Activated CD4-positive, alpha-beta T cell treated with anti-CD3 and anti-CD28 coated beads for 36 hours (primary cell): ENCODE measurements at regions of chr5 and their contacts with region 1.

Region 1: DNA sequence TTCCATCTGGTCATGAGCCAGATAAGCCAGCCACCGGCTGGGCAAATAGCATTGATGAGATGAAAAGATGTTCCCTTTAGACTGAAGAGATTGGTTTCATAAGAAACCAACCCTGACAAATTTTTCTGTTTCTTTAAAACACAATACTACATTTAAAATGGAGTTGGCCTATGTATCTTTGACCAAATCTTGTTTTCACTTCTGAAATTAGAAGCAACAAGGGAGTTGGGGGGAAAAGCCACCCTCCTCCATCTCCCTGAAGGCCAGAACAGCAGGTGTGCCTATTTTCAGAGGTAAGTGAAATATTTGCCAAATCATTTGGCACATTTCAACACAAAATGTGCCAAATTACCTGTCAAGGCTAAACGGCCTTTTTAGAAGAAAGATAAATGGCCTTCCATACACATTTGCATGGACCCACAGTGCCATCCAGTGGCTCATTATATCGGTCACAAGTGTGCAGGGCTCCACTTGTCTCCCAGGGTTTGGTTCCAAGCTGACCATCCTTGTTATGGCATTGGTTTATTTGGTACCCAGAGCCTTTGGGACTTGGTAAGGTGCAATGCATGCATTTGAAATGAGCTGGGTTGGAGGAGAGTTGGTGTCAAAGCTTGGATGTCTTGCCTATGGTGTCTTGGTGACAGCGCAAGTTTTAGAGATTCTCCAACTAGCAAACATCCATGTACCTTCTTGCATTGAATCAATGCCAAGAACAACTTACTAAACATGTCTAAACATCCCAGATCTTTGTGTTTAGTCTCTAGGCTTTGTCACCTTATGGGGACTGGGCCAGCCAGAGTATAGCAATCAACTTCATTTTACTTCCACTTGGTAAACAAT is 372.0 kb upstream of the KIF2A start:
- DNase-seq: peak; percentile 45
- ATAC-seq: no peak
- H3K4me3 Mint-ChIP-seq: no peak overlapping the region
- H3K27ac Mint-ChIP-seq: no peak overlapping the region
- H3K4me1 Mint-ChIP-seq: no peaks in the 10 kb centered on the region
- H3K27me3 Mint-ChIP-seq: peaks cover 2% of the 10 kb centered on the region

Region 2: DNA sequence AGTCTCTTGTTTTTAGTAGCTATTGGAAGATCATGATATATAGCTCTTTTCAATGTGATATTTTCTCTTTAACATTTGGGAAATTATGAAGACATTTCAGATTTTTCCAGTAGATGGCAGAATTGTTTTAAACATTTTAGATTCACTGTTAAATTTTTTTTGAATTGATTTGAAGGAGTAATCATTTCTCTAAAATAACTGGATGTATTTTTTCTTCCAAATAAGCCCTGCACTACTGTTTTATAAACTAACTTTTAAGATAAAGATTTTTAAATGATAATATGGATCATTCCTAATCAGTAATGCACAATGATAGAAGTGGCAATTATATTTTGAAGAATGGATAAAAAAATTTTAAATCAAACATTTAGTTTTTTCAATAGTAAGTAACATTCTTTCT is 974.9 kb before region 1 on chr5:
- CTCF ChIA-PET with region 1: no interaction called
- POLR2A ChIA-PET with region 1: no interaction called
- intact Hi-C with region 1: loop called in 1 of 2 experiments (anchors 10 kb)
- DNase-seq: no peak
- ATAC-seq: no peak
- H3K4me3 Mint-ChIP-seq: no peak overlapping the region
- H3K27ac Mint-ChIP-seq: no peak overlapping the region
- H3K4me1 Mint-ChIP-seq: peaks cover 14% of the 10 kb centered on the region
- H3K27me3 Mint-ChIP-seq: no peaks in the 10 kb centered on the region

Region 3: GRCh38 chr5:61200582-61201155 is 733.3 kb before region 1 on chr5:
- CTCF ChIA-PET with region 1: no interaction called
- POLR2A ChIA-PET with region 1: no interaction called
- intact Hi-C with region 1: loop called in 1 of 2 experiments (anchors 5 kb)
- DNase-seq: no peak
- ATAC-seq: no peak
- H3K4me3 Mint-ChIP-seq: no peak overlapping the region
- H3K27ac Mint-ChIP-seq: no peak overlapping the region
- H3K4me1 Mint-ChIP-seq: peaks cover 14% of the 10 kb centered on the region
- H3K27me3 Mint-ChIP-seq: peaks cover 39% of the 10 kb centered on the region

Region 4: DNA sequence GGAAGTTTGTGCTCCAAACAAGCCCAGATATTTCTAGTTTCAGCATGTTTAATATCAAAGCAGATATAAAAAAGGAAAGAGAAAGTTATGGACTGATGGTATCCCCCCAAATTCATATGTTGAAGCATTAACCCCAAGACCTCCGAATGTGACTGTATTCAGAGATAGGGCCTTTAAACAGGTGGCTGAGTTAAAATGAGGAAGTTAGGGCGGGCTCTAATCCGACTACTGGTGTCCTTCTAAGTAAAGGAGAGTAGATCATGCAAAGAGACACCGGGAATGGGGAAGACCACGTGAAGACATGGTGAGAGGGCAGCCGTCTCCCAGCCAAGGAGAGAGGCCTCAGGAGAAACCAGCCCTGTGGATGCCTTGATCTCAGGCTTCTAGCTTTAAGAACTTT is 47.9 kb after region 1 on chr5:
- CTCF ChIA-PET with region 1: no interaction called
- POLR2A ChIA-PET with region 1: no interaction called
- intact Hi-C with region 1: loop called in 1 of 2 experiments (anchors 2 kb)
- DNase-seq: no peak
- ATAC-seq: no peak
- H3K4me3 Mint-ChIP-seq: no peak overlapping the region
- H3K27ac Mint-ChIP-seq: no peak overlapping the region
- H3K4me1 Mint-ChIP-seq: no peaks in the 10 kb centered on the region
- H3K27me3 Mint-ChIP-seq: peaks cover 5% of the 10 kb centered on the region